ENCODE measurements at regions of chr7 and their contacts with region 1.

Region 1: DNA sequence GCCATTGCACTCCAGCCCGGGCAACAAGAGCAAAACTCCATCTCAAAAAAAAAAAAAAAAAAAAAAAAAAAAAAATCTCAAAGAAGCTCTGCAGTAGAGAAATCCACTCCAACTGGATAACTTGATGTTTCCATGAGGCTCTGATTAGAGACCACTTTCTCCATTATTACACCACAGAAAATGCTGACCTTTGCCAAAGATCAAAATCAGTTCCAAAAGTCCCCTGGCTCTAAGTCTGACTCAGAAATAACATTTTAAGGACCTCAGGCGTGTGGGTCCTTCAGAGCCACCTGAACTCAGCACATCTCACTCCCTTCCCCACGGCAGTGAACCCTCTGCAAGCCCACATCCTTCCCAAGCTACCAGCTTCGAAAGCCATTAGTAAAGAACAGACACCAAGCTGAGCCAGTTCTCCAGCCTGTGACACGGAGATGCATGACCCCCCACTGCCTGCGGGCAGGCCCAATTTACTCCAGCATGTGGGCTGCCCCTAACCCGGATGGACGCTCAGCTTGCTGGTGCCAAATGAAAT is 13.8 kb upstream of the TMEM120A start:
- DNase-seq: no peak
- H3K4me3 Mint-ChIP-seq: peak overlapping the region; percentile 20
- H3K27ac Mint-ChIP-seq: peak overlapping the region; percentile 91
- H3K4me1 Mint-ChIP-seq: peaks cover 36% of the 10 kb centered on the region
- H3K27me3 Mint-ChIP-seq: no peaks in the 10 kb centered on the region

Region 2: DNA sequence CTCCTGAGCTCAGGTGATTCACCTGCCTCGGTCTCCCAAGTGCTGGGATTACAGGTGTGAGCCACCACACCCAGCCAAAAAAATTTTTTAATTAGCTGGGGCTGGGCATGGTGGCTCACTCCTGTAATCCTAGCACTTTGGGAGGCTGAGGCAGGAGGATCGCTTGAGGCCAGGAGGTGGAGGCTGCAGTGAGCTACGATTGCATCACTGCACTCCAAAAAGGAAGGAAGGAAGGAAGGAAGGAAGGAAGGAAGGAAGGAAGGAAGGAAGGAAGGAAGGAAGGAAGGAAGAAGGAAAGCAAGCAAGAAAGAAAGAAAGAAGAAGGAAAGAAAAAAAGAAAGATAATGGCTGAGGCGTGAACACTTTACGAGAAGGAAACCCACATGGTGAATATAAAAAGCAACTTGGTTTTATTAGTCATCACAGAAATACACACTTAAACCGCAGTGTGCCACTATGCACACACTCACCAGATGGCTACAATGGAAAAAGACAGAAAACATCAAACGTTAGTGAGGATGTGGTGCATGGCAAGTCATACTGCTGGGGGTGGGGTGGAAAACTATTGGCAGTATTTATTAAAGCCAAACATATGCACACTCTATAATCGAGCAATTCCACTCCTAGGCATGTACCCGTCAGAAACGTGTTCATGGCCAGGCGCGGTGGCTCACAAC is 231.8 kb before region 1 on chr7:
- intact Hi-C with region 1: loop called (anchors 1 kb)
- DNase-seq: peak; percentile 50
- H3K4me3 Mint-ChIP-seq: no peak overlapping the region
- H3K27ac Mint-ChIP-seq: peak overlapping the region; percentile 78
- H3K4me1 Mint-ChIP-seq: peaks cover 36% of the 10 kb centered on the region
- H3K27me3 Mint-ChIP-seq: peaks cover 7% of the 10 kb centered on the region

Region 3: GRCh38 chr7:75866489-75867389 is 141.5 kb before region 1 on chr7:
- intact Hi-C with region 1: loop called (anchors 1 kb)
- DNase-seq: peak; percentile 33
- H3K4me3 Mint-ChIP-seq: no peak overlapping the region
- H3K27ac Mint-ChIP-seq: no peak overlapping the region
- H3K4me1 Mint-ChIP-seq: peaks cover 22% of the 10 kb centered on the region
- H3K27me3 Mint-ChIP-seq: peaks cover 3% of the 10 kb centered on the region

Region 4: DNA sequence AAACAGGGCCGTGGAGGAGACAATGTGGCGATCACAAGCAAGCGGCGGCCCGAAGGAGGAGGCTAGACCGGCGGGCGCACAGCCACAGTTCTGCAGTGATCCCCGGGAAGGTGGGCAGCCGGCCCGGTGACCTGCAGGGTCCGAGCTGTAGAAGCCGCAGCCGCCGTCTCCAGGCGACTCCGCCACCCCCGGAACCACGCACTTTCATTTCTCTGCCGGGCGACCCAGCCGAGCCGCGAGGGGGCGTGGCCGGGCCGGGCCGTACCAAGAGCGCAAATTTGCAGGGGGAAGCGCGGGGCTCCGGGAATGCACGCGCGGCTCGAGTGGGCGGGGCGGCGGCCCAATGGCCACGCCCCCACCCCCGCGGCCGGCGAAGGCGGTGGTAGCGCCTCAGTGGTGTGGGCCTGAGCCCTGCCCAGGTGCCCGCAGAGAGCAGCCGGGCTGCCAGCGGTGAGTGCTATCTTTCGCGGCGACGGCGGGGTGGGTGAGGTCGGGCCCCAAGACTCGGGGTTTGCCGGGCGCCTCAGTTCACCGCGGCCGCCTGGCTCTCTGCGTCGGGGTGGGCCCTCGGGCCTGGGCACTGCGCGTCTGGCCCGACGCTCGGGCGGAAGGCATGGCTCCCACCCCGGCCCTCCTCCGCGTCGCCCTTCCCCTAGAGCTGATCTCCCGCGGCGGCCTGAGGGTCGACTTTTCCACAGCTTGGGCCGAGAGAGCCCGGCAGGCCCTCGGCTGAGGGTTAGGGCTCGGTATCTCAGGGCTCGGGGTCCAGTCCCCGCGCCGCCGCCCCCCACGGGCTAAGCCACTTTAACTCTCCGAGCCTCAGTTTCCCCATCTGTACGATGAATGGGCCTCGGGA is 93.3 kb before region 1 on chr7 and contains the start of gene POR:
- intact Hi-C with region 1: loop called (anchors 2 kb)
- DNase-seq: peak; percentile 97
- H3K4me3 Mint-ChIP-seq: peak within 1 kb of the TSS; percentile 87
- H3K27ac Mint-ChIP-seq: peak within 1 kb of the TSS; percentile 80
- H3K4me1 Mint-ChIP-seq: peaks cover 15% of the 10 kb centered on the region
- H3K27me3 Mint-ChIP-seq: no peaks in the 10 kb centered on the region
- total RNA-seq, gene POR: 105 and 106 TPM in 2 replicates

Region 5: GRCh38 chr7:76020031-76020714 is 12.0 kb after region 1 on chr7:
- intact Hi-C with region 1: loop called (anchors 1 kb)
- DNase-seq: peak; percentile 49
- H3K4me3 Mint-ChIP-seq: no peak overlapping the region
- H3K27ac Mint-ChIP-seq: peak overlapping the region; percentile 77
- H3K4me1 Mint-ChIP-seq: peaks cover 24% of the 10 kb centered on the region
- H3K27me3 Mint-ChIP-seq: no peaks in the 10 kb centered on the region

Region 6: GRCh38 chr7:76121044-76121443 is 112.8 kb after region 1 on chr7:
- intact Hi-C with region 1: no loop called
- DNase-seq: no peak
- H3K4me3 Mint-ChIP-seq: no peak overlapping the region
- H3K27ac Mint-ChIP-seq: no peak overlapping the region
- H3K4me1 Mint-ChIP-seq: peaks cover 17% of the 10 kb centered on the region
- H3K27me3 Mint-ChIP-seq: no peaks in the 10 kb centered on the region

Measured in activated T-helper 2 cell treated with anti-CD3 and anti-CD28 coated beads, Interferon-gamma antibody, Interleukin-2, Interleukin-4, amounts not matched to agents 10 μg/mL and 5 μg/mL and 100 μg/mL, durations not matched to agents 14 hours and 24 hours and 36 hours (primary cell).